Activated CD8-positive, alpha-beta T cell treated with anti-CD3 and anti-CD28 coated beads, Interleukin-2, amount 10 ng/mL, durations not matched to agents 7 days and 5 days (primary cell): ENCODE measurements at regions of chr10 and their contacts with region 1.

Region 1: DNA sequence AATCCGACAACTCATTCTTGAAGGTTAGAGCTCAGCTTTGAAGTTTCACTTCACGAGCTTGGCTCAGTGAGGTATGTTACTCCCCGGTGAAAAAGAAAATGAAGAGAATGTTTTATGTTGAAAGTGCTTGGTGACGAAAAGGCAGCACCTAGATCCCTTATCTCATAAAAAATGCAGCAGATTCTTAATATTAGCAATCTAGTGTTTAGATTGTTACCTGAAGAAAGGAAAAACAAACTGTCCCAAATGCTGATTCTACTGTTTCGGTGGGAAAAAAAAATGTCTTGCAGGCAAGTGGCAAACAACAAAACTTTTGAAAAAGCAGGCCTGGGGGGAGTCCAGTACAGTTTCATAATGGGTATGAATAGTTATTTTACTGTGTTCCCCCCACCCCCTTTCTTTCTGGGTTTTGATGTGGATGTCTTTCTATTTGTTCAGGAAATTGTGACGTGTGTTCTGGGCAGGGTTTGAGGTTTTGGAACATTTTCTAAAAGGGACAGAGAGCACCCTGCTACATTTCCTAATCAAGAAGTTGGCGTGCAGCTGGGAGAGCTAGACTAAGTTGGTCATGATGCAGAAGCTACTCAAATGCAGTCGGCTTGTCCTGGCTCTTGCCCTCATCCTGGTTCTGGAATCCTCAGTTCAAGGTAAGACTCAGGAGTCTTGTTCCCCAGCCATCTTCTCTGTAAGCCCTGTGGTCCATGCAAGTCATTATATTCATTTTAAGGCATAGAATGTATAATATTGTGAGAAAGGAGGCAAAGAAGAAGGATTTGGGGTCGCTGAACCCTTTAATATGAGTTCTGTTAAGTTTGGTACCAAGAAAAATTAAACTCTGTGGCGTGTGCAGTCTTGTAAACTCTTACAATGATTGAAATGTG is at the start of gene SRGN:
- DNase-seq: peak; percentile 90
- ATAC-seq: peak; percentile 58
- H3K4me3 Mint-ChIP-seq: peak within 1 kb of the TSS; percentile 82
- H3K27ac Mint-ChIP-seq: peak within 1 kb of the TSS; percentile 95
- H3K4me1 Mint-ChIP-seq: peaks cover 58% of the 10 kb centered on the region
- H3K27me3 Mint-ChIP-seq: no peaks in the 10 kb centered on the region
- total RNA-seq, gene SRGN: 166 to 168 TPM

Region 2: GRCh38 chr10:69004821-69005220 is 83.0 kb before region 1 on chr10:
- CTCF ChIA-PET with region 1: interaction called, 199 read pairs
- POLR2A ChIA-PET with region 1: interaction called, 18 read pairs
- DNase-seq: no peak
- ATAC-seq: peak; percentile 49
- H3K4me3 Mint-ChIP-seq: no peak overlapping the region
- H3K27ac Mint-ChIP-seq: no peak overlapping the region
- H3K4me1 Mint-ChIP-seq: peaks cover 2% of the 10 kb centered on the region
- H3K27me3 Mint-ChIP-seq: no peaks in the 10 kb centered on the region

Region 3: GRCh38 chr10:69045441-69046300 is 42.2 kb before region 1 on chr10:
- CTCF ChIA-PET with region 1: interaction called, 39 read pairs
- POLR2A ChIA-PET with region 1: interaction called, 49 read pairs
- DNase-seq: peak; percentile 41
- ATAC-seq: peak; percentile 75
- H3K4me3 Mint-ChIP-seq: peak overlapping the region; percentile 29
- H3K27ac Mint-ChIP-seq: peak overlapping the region; percentile 95
- H3K4me1 Mint-ChIP-seq: peaks cover 44% of the 10 kb centered on the region
- H3K27me3 Mint-ChIP-seq: no peaks in the 10 kb centered on the region

Region 4: GRCh38 chr10:69051303-69051702 is 36.5 kb before region 1 on chr10:
- CTCF ChIA-PET with region 1: interaction called, 39 read pairs
- POLR2A ChIA-PET with region 1: interaction called, 49 read pairs
- DNase-seq: peak; percentile 77
- ATAC-seq: peak; percentile 70
- H3K4me3 Mint-ChIP-seq: no peak overlapping the region
- H3K27ac Mint-ChIP-seq: peak overlapping the region; percentile 70
- H3K4me1 Mint-ChIP-seq: peaks cover 59% of the 10 kb centered on the region
- H3K27me3 Mint-ChIP-seq: no peaks in the 10 kb centered on the region

Region 5: DNA sequence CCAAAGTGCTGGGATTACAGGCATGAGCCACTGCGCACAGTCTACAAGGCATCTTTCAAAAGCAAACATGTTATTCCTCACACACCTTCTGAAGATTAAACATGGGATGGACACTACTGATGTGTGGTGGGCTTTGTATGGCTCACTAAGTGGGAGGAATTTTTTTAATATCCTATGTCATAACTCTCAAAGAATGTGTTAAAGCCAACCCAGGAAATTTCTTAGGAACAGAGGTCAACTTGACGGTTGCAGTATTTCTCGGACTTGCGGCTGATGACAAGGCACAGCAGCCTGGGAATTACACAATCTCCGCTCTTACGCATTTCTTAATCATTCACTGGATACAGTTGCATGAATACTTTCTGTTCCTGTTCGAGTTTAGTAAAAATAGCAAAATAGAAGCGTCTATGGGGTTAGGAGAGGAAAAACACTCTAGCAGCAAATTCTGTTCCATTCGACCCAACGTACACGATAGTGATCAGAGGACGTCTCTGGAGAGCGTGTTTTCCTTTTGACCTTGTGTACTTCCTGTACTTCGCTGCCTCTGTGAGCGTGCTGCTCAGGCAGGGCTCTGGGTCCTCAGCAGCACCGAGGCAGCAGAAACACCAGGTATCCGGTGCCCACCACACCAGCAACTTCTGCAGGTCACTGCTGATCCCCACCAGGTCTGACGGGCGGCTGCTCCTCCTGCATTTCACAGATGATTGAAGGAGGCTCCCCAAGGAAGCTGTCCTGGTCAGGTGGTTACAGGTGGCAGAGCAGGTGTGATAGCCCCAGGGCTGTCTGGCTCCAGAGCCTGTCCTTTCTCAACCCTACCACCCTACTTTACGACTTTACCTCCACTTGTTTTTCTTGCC is 26.3 kb before region 1 on chr10:
- CTCF ChIA-PET with region 1: interaction called, 22 read pairs
- POLR2A ChIA-PET with region 1: interaction called, 40 read pairs
- DNase-seq: peak; percentile 45
- ATAC-seq: peak; percentile 79
- H3K4me3 Mint-ChIP-seq: peak overlapping the region; percentile 27
- H3K27ac Mint-ChIP-seq: peak overlapping the region; percentile 45
- H3K4me1 Mint-ChIP-seq: peaks cover 57% of the 10 kb centered on the region
- H3K27me3 Mint-ChIP-seq: no peaks in the 10 kb centered on the region

Region 6: GRCh38 chr10:69141304-69141703 is 53.5 kb after region 1 on chr10:
- CTCF ChIA-PET with region 1: no interaction called
- POLR2A ChIA-PET with region 1: no interaction called
- DNase-seq: no peak
- ATAC-seq: no peak
- H3K4me3 Mint-ChIP-seq: no peak overlapping the region
- H3K27ac Mint-ChIP-seq: no peak overlapping the region
- H3K4me1 Mint-ChIP-seq: peaks cover 3% of the 10 kb centered on the region
- H3K27me3 Mint-ChIP-seq: no peaks in the 10 kb centered on the region

Region 7: GRCh38 chr10:69229622-69229928 is 141.7 kb after region 1 on chr10:
- CTCF ChIA-PET with region 1: interaction called, 3 read pairs
- POLR2A ChIA-PET with region 1: interaction called, 11 read pairs
- DNase-seq: no peak
- ATAC-seq: no peak
- H3K4me3 Mint-ChIP-seq: peak overlapping the region; percentile 80
- H3K27ac Mint-ChIP-seq: peak overlapping the region; percentile 98
- H3K4me1 Mint-ChIP-seq: peaks cover 86% of the 10 kb centered on the region
- H3K27me3 Mint-ChIP-seq: no peaks in the 10 kb centered on the region